A549 (cell line): ENCODE measurements at regions of chr12 and their contacts with region 1.

Region 1: GRCh38 chr12:124036674-124037109 is 63.7 kb downstream of the ZNF664 start:
- DNase-seq: peak; percentile 33 to 56
- ATAC-seq: peak; percentile 45 to 72; a peak in 4 of 6 replicates
- H3K4me3 ChIP-seq: no peak overlapping the region
- H3K27ac ChIP-seq: peak overlapping the region in 1 of 2 experiments; percentile 27; a peak in 2 of 6 replicates
- H3K4me1 ChIP-seq: no peaks in the 10 kb centered on the region
- CTCF ChIP-seq: peak; percentile 98
- EP300 ChIP-seq: no peak
- POLR2A ChIP-seq: no peak
- RAD21 ChIP-seq: peak; percentile 96 to 97

Region 2: DNA sequence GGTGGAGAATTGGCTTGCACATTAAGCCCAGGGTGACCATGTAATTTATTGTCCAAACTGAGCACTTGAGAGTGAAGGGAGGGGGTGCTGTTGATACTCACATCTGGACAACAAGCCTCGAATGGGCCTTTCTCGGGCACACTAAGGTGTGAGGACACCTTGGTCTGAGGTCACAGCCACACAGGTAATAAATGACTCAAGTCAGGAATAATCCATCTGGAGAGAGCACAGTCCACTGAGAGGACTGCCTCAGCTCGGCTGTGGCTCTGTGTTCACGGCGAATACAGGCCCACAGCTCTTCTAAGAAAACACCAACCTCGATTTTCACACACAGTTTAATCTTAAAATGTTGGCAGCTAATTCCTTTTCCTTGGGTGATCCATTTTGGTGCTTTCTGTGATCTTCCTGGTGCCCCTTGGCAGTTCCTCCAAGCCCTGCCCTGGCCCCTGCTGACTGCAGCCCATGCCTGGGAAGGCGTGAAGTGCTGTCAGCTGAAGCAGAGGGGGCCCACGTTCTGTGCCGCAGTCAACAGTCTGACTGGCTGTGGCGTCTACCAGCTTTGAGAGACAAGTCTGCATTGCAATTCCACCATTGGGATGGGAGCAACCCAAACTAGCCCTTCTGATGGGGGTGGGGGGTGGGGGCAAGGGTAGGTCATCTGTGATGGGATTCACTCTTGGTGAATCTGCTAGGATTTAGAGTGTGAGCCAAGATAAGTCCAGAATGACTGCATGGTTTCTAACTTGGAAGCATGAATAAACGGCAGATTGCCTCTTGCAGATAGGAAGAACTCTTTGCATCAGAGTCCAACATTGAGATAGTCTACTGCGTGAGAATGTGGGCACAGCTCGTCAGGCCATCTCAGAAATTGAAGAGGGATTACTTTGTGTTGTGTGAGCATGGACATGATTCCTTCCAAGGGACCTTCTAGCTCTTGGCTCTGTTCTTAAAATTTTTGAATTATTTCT is 20.9 kb before region 1 on chr12:
- CTCF ChIA-PET with region 1: interaction called, 23 read pairs
- POLR2A ChIA-PET with region 1: no interaction called
- DNase-seq: no peak
- ATAC-seq: no peak
- H3K4me3 ChIP-seq: no peak overlapping the region
- H3K27ac ChIP-seq: no peak overlapping the region
- H3K4me1 ChIP-seq: no peaks in the 10 kb centered on the region
- CTCF ChIP-seq: no peak
- EP300 ChIP-seq: no peak
- POLR2A ChIP-seq: no peak
- RAD21 ChIP-seq: no peak

Region 3: GRCh38 chr12:124024263-124024678 is 12.4 kb before region 1 on chr12:
- CTCF ChIA-PET with region 1: interaction called, 10 read pairs
- POLR2A ChIA-PET with region 1: no interaction called
- DNase-seq: no peak
- ATAC-seq: no peak
- H3K4me3 ChIP-seq: no peak overlapping the region
- H3K27ac ChIP-seq: no peak overlapping the region
- H3K4me1 ChIP-seq: no peaks in the 10 kb centered on the region
- CTCF ChIP-seq: no peak
- EP300 ChIP-seq: no peak
- POLR2A ChIP-seq: no peak
- RAD21 ChIP-seq: no peak

Region 4: GRCh38 chr12:124053851-124054250 is 17.2 kb after region 1 on chr12:
- CTCF ChIA-PET with region 1: interaction called, 13 read pairs
- POLR2A ChIA-PET with region 1: no interaction called
- DNase-seq: peak; percentile 44 to 73
- ATAC-seq: peak; percentile 94 to 96
- H3K4me3 ChIP-seq: no peak overlapping the region
- H3K27ac ChIP-seq: no peak overlapping the region
- H3K4me1 ChIP-seq: 0 out of 3 replicates have a peak, but pooled peaks cover 3% of the 10 kb centered on the region
- CTCF ChIP-seq: peak; percentile 58
- EP300 ChIP-seq: no peak
- POLR2A ChIP-seq: no peak
- RAD21 ChIP-seq: peak; percentile 78 to 86

Region 5: DNA sequence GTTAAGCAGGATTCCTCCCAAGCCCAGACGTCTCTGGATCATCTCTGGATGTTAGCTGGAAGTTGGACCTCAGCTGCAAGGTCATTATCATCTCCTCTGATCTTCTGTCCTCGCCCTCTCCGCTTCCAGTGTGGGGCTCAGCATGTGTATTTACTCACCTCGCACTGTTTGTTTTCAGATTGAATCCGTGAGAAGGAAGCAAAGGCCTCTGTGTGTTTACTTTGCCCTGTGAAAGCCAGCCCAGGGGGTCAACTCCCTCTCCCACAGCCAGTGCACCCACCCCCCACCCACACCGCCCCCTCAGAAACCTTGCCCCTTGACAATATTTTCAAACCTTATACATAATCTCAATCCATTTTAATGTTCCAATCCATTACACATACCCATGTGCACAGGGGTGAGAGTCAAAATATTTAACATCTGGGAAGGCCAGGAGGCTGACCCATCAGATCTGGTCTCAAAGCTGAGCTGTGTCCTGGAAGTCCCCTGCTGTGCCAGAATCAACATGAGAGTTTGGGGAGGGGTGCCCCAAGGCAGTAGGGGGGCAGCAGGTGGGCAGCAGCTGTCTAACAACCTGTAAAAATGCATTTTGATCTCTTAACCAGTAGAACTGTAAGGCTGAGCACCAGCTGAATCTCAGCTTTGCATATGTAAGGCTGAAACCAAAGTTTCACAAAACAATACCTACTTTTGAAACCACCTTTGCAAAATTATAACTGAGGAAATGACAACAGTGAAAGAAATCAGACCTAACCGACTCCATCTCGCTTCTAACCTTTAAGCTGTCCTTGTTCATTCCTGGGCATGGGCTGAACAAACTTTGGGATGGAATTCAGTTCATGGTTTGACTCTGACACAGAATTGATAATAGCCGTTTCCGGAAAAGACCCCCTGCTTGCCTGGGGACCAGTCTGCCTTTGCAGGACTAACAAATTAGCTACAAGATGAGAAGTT is 94.3 kb after region 1 on chr12:
- CTCF ChIA-PET with region 1: no interaction called
- POLR2A ChIA-PET with region 1: no interaction called
- DNase-seq: peak; percentile 23 to 80
- ATAC-seq: peak; percentile 88 to 90
- H3K4me3 ChIP-seq: no peak overlapping the region
- H3K27ac ChIP-seq: peak overlapping the region; percentile 50 to 67; a peak in 5 of 6 replicates
- H3K4me1 ChIP-seq: peaks cover 21% of the 10 kb centered on the region
- CTCF ChIP-seq: no peak
- EP300 ChIP-seq: peak in 1 of 2 experiments; percentile 48; a peak in 1 of 5 replicates
- POLR2A ChIP-seq: no peak
- RAD21 ChIP-seq: no peak; a peak in 1 of 5 replicates

Region 6: GRCh38 chr12:124299628-124300388 is 263.1 kb after region 1 on chr12:
- CTCF ChIA-PET with region 1: interaction called, 14 read pairs
- POLR2A ChIA-PET with region 1: no interaction called
- DNase-seq: no peak
- ATAC-seq: no peak
- H3K4me3 ChIP-seq: no peak overlapping the region
- H3K27ac ChIP-seq: no peak overlapping the region
- H3K4me1 ChIP-seq: peaks cover 7% of the 10 kb centered on the region; the same call in 1 of the 3 replicates
- CTCF ChIP-seq: no peak
- EP300 ChIP-seq: no peak
- POLR2A ChIP-seq: no peak
- RAD21 ChIP-seq: no peak

Region 7: GRCh38 chr12:124321040-124321481 is 284.4 kb after region 1 on chr12:
- CTCF ChIA-PET with region 1: interaction called, 63 read pairs
- POLR2A ChIA-PET with region 1: no interaction called
- DNase-seq: peak; percentile 61 to 71
- ATAC-seq: peak; percentile 25 to 85
- H3K4me3 ChIP-seq: no peak overlapping the region
- H3K27ac ChIP-seq: 0 out of 6 replicates have a peak overlapping the region, but pooled peaks of 1 of the 2 experiments have one; percentile 9
- H3K4me1 ChIP-seq: no peaks in the 10 kb centered on the region
- CTCF ChIP-seq: peak; percentile 77
- EP300 ChIP-seq: no peak
- POLR2A ChIP-seq: no peak
- RAD21 ChIP-seq: peak; percentile 84 to 90

Region 8: GRCh38 chr12:124754949-124755800 is 718.5 kb after region 1 on chr12:
- CTCF ChIA-PET with region 1: interaction called, 12 read pairs
- POLR2A ChIA-PET with region 1: no interaction called
- DNase-seq: no peak
- ATAC-seq: 0 out of 6 replicates have a peak, but pooled peaks have one; percentile 5 to 9
- H3K4me3 ChIP-seq: no peak overlapping the region
- H3K27ac ChIP-seq: peak overlapping the region; percentile 20 to 28; a peak in 2 of 6 replicates
- H3K4me1 ChIP-seq: peaks cover 8% of the 10 kb centered on the region
- CTCF ChIP-seq: no peak
- EP300 ChIP-seq: no peak
- POLR2A ChIP-seq: no peak; the same call in 1 of the 2 replicates
- RAD21 ChIP-seq: no peak